Heart right ventricle (tissue), 16 donors: ENCODE measurements at regions of chr9 and their contacts with region 1.

Region 1: DNA sequence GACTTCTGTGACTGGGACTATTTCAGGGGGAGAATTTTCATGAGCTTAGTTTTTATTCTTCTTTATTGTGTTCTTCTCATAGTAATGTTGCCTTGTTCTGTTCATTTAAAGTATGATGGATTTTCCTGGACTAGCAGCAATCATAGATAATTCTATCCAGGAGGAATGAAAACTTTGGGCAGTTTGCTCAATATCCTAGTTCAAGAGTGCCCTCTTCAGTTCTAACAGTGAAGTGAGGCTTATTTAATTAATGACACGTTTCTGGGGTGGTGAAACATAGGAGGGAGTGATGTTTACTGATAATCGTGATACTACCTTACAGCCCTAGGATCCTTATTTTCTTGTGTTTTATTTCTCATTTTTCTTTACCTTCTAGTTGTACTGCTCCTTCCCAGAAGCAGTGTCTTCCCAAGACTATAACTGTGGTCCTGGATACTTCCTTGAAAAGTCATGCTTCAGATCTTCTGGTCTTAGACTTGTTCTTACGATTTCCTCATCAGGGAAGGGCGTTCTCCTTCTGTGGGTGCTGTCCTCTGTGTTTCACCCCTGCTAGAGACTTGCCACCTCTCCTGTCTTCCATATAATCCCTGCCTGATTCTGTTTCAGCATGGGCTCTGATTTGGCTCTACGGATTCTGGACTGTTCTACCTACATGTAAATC is 57.4 kb downstream of the CFAP95 start:
- DNase-seq: no peak
- ATAC-seq: peak in 6 of 8 donors; percentile 38 to 74 (median 54)
- H3K4me3 ChIP-seq: no peak overlapping the region
- H3K27ac ChIP-seq: no peak overlapping the region
- H3K4me1 ChIP-seq: peaks cover 0 to 19% (median 5%) of the 10 kb centered on the region in 9 donors
- H3K27me3 ChIP-seq: no peaks in the 10 kb centered on the region
- CTCF ChIP-seq: peak; percentile 13 to 70 (median 59)

Region 2: GRCh38 chr9:69745716-69746437 is 132.1 kb before region 1 on chr9:
- intact Hi-C with region 1: loop called in 2 of 10 experiments (anchors 5 to 10 kb)
- DNase-seq: no peak
- ATAC-seq: peak in 3 of 8 donors; percentile 17 to 44 (median 27)
- H3K4me3 ChIP-seq: no peak overlapping the region
- H3K27ac ChIP-seq: peak overlapping the region in 1 of 10 donors; percentile 67
- H3K4me1 ChIP-seq: peaks cover 0 to 32% (median 22%) of the 10 kb centered on the region in 9 donors
- H3K27me3 ChIP-seq: no peaks in the 10 kb centered on the region
- CTCF ChIP-seq: peak in 6 of 9 donors; percentile 14 to 33 (median 26)

Region 3: DNA sequence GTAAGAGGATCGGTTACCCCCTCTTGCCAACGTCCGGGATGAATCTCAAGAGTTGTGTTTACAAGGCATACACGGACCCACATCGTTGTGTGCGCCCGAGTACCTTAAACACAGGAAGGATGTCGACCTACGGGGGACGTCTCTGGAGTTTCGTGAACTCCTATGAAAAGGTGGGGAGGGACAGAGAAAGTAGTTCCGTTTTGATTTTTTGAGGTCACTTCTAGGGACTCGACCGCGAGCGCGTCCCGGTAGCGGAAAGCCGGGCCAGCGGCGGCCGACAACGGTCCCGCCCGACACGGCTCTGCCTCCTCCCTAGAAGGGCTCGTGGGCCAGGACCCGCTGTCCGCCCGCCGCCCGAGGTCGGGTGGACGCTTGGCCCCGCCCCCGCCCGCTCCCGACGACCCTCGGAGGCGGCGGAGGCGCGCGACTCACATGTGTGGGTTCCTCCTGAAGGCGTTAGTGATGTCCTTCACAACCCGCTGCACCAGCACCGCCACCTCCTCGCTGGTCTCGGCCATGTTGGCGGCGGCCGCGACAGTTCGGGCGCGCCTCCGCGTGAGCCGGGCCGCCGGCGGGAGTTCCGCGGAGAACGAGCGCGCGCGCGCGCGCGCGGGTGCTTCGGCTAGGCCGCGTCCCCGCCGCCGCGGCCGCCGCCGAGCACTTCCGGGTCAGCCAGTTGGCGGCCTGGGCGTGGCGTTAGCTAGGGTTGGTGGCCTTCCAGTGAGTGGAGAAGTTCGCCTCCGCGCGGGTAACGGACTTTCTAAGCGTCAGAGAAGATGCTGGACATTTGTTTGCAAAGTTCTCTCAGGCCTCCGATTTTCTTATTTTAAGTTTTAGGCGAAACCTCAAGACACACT is 118.3 kb before region 1 on chr9 and contains the start of gene PTAR1:
- intact Hi-C with region 1: loop called in 1 of 10 experiments (anchors 10 kb)
- DNase-seq: peak; percentile 90 to 92
- ATAC-seq: peak; percentile 97 to 98 (median 97)
- H3K4me3 ChIP-seq: peak within 1 kb of the TSS; percentile 72 to 97 (median 84)
- H3K27ac ChIP-seq: peak within 1 kb of the TSS; percentile 86 to 99 (median 98)
- H3K4me1 ChIP-seq: peaks cover 0 to 45% (median 25%) of the 10 kb centered on the region in 9 donors
- H3K27me3 ChIP-seq: no peaks in the 10 kb centered on the region
- CTCF ChIP-seq: no peak
- total RNA-seq, gene PTAR1: 21.8 to 30.2 (median 24.3) TPM